IMR-90 (cell line): ENCODE measurements at regions of chr9 and their contacts with region 1.

Region 1: DNA sequence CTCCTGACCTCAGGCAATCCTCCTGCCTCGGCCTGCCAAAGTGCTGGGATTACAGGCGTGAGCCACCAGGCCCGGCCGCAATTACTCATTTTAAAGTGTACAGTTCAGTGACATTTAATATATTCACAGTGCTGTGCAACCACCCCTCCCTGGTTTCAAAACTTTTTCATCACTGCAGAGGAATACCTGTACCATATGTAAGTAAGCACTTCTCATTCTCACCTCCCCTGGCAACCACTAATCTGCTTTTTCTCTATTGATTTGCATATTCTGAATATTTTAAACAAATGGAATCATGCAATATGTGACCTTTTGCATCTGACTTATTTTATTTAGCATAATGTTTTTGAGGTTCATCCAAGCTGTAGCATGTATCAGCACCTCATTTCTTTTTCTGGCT is 21.3 kb upstream of the KIAA1958 start:
- DNase-seq: no peak
- ATAC-seq: no peak
- H3K4me3 ChIP-seq: no peak overlapping the region
- H3K27ac ChIP-seq: no peak overlapping the region
- H3K4me1 ChIP-seq: no peaks in the 10 kb centered on the region
- H3K27me3 ChIP-seq: no peaks in the 10 kb centered on the region
- CTCF ChIP-seq: no peak
- POLR2A ChIP-seq: no peak
- RAD21 ChIP-seq: no peak

Region 2: DNA sequence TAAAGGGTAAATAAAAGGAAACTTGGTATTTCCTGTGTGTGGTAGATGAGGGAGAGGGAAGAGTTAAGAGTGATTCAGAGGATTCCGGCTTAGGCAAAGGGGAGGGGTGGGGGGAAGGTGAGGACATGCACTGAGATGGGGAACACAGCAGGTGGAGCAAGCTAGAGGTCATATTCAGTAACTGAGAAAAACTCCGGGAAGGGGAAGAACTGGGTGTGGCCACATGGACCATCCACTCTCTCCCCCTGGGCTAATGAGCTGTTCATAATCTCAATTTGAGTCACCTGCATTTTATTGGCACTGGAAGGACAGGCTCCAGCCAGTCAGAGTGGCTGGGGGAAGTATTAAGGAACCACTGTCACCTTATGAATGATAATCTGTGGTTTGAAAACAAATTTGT is 613.8 kb before region 1 on chr9:
- CTCF ChIA-PET with region 1: no interaction called
- POLR2A ChIA-PET with region 1: no interaction called
- dilution Hi-C with region 1: no loop called
- in situ Hi-C with region 1: no loop called
- intact Hi-C with region 1: loop called (anchors 5 kb)
- DNase-seq: peak; percentile 19
- ATAC-seq: peak; percentile 44; the same call in 1 of the 2 replicates
- H3K4me3 ChIP-seq: no peak overlapping the region
- H3K27ac ChIP-seq: no peak overlapping the region
- H3K4me1 ChIP-seq: peaks cover 6% of the 10 kb centered on the region
- H3K27me3 ChIP-seq: no peaks in the 10 kb centered on the region
- CTCF ChIP-seq: no peak
- POLR2A ChIP-seq: no peak
- RAD21 ChIP-seq: no peak